Caco-2 (cell line): ENCODE measurements at regions of chr14 and their contacts with region 1.

Region 1: DNA sequence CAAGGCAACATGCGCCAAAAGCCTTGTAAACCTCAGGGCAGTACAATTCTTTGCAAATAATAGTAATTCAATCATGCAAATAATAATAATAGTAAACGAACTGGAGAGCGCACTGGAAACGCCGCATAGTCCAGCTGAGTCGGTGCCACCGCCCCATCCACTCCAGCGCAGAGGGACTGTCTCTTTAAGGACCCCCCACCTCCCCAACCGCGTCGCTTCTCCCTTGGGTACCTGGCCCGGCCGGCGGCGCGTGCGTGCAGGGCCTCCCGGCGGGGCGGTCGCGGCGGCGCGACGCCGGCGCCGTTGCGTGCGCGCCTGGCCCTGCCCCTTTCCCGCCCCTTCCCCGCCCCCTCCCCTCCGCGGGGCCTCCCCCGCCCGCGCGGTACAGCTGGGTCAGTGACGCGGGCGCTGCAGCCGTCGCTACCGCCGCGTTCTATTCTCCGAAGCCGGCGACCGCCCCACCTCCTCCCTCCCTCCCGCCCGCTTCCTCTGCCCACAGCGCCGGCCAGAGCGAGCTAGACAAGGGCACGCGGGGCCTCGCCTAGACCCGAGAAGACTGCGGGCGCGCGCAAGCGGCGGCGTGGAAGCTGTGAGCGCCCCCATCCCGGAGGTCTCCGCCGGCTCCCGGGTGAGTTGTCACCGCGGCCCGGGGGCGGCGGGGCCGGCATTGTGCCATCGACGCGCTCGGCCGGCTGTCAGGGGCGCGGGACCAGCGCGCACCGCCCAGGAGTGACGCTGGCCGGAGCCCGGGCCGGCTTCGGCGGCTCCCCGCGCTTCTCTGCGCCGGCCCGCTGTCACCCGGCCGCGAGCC is at the start of gene SUSD6:
- DNase-seq: peak; percentile 88 to 90
- H3K4me3 ChIP-seq: peak within 1 kb of the TSS; percentile 67
- H3K4me3 Mint-ChIP-seq: peak within 1 kb of the TSS; percentile 91
- H3K27ac Mint-ChIP-seq: peak within 1 kb of the TSS; percentile 78
- H3K4me1 ChIP-seq: peaks cover 36% of the 10 kb centered on the region
- H3K4me1 Mint-ChIP-seq: peaks cover 52% of the 10 kb centered on the region
- H3K27me3 ChIP-seq: no peaks in the 10 kb centered on the region
- H3K27me3 Mint-ChIP-seq: no peaks in the 10 kb centered on the region
- CTCF ChIP-seq: no peak
- total RNA-seq, gene SUSD6: 16.6 and 21.5 TPM in 2 replicates

Region 2: GRCh38 chr14:69460093-69460701 is 151.2 kb before region 1 on chr14:
- CTCF ChIA-PET with region 1: no interaction called
- POLR2A ChIA-PET with region 1: no interaction called
- intact Hi-C with region 1: no loop called
- DNase-seq: peak; percentile 49 to 66
- H3K4me3 ChIP-seq: no peak overlapping the region
- H3K4me3 Mint-ChIP-seq: no peak overlapping the region
- H3K27ac Mint-ChIP-seq: no peak overlapping the region
- H3K4me1 ChIP-seq: no peaks in the 10 kb centered on the region
- H3K4me1 Mint-ChIP-seq: no peaks in the 10 kb centered on the region
- H3K27me3 ChIP-seq: no peaks in the 10 kb centered on the region
- H3K27me3 Mint-ChIP-seq: no peaks in the 10 kb centered on the region
- CTCF ChIP-seq: peak; percentile 69 to 77

Region 3: GRCh38 chr14:69567562-69567961 is 43.8 kb before region 1 on chr14:
- CTCF ChIA-PET with region 1: no interaction called
- POLR2A ChIA-PET with region 1: no interaction called
- intact Hi-C with region 1: no loop called
- DNase-seq: no peak
- H3K4me3 ChIP-seq: no peak overlapping the region
- H3K4me3 Mint-ChIP-seq: no peak overlapping the region
- H3K27ac Mint-ChIP-seq: no peak overlapping the region
- H3K4me1 ChIP-seq: peaks cover 33% of the 10 kb centered on the region
- H3K4me1 Mint-ChIP-seq: peaks cover 14% of the 10 kb centered on the region
- H3K27me3 ChIP-seq: no peaks in the 10 kb centered on the region; the same call in 1 of the 2 replicates
- H3K27me3 Mint-ChIP-seq: peaks cover 13% of the 10 kb centered on the region
- CTCF ChIP-seq: no peak

Region 4: GRCh38 chr14:69657950-69658355 is 46.5 kb after region 1 on chr14:
- CTCF ChIA-PET with region 1: interaction called, 3 read pairs
- POLR2A ChIA-PET with region 1: no interaction called
- intact Hi-C with region 1: loop called (anchors 2 kb)
- DNase-seq: peak; percentile 74 to 78
- H3K4me3 ChIP-seq: peak overlapping the region; percentile 8; the same call in 1 of the 2 replicates
- H3K4me3 Mint-ChIP-seq: peak overlapping the region; percentile 55
- H3K27ac Mint-ChIP-seq: peak overlapping the region; percentile 84
- H3K4me1 ChIP-seq: peaks cover 66% of the 10 kb centered on the region
- H3K4me1 Mint-ChIP-seq: peaks cover 52% of the 10 kb centered on the region
- H3K27me3 ChIP-seq: no peaks in the 10 kb centered on the region
- H3K27me3 Mint-ChIP-seq: no peaks in the 10 kb centered on the region
- CTCF ChIP-seq: no peak

Region 5: DNA sequence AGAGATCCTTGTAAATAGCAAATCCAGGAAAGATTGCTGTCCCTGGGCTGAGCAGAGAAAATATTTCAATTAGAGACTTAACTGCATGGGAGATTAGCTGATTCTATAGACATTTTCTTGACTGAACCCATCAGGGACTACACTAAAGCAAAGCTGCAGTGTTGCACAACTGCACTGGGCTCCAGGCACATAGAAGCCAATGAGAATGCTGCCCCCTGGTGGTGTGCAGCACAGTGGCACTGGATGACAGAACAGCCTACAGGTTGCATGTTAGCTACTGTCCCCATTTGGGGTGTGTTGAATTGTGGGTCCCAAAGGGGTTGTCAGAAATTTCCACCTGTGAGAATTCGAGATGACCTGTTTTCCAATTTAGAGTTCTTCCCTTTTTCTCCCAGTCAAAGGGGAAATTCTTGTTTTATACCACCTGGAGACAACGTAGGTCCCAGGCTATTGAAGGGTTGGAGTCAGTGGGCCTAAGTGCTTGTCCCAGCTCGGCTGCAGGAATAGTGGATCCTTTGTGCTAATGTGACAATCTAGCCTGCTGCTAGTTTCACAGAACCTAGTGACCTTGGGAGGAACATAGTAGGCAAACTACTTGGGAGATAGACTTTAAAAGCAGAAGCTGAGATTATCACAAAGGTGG is 462.6 kb after region 1 on chr14:
- CTCF ChIA-PET with region 1: no interaction called
- POLR2A ChIA-PET with region 1: no interaction called
- intact Hi-C with region 1: no loop called
- DNase-seq: peak; percentile 82 to 87
- H3K4me3 ChIP-seq: no peak overlapping the region
- H3K4me3 Mint-ChIP-seq: no peak overlapping the region
- H3K27ac Mint-ChIP-seq: no peak overlapping the region
- H3K4me1 ChIP-seq: peaks cover 13% of the 10 kb centered on the region
- H3K4me1 Mint-ChIP-seq: peaks cover 18% of the 10 kb centered on the region
- H3K27me3 ChIP-seq: no peaks in the 10 kb centered on the region
- H3K27me3 Mint-ChIP-seq: no peaks in the 10 kb centered on the region
- CTCF ChIP-seq: peak; percentile 88 to 96